ENCODE measurements at regions of chr4 and their contacts with region 1.

Region 1: GRCh38 chr4:76213415-76214176 is at the start of gene SCARB2:
- DNase-seq: peak; percentile 96
- H3K4me3 ChIP-seq: peak within 1 kb of the TSS; percentile 85 to 86
- H3K27ac ChIP-seq: peak within 1 kb of the TSS; percentile 88 to 95
- H3K4me1 ChIP-seq: peaks cover 18 to 32% of the 10 kb centered on the region in 2 experiments; a peak in 3 of 4 replicates
- H3K27me3 ChIP-seq: no peaks in the 10 kb centered on the region
- CTCF ChIP-seq: no peak
- EP300 ChIP-seq: no peak
- RAD21 ChIP-seq: no peak
- polyA plus RNA-seq, gene SCARB2: 81.3 and 82.6 TPM in 2 replicates

Region 2: GRCh38 chr4:76095568-76095967 is 118.0 kb before region 1 on chr4:
- CTCF ChIA-PET with region 1: no interaction called
- POLR2A ChIA-PET with region 1: no interaction called
- DNase-seq: no peak
- H3K4me3 ChIP-seq: no peak overlapping the region
- H3K27ac ChIP-seq: no peak overlapping the region
- H3K4me1 ChIP-seq: peaks cover 0 to 2% of the 10 kb centered on the region in 2 experiments; a peak in 2 of 4 replicates
- H3K27me3 ChIP-seq: no peaks in the 10 kb centered on the region
- CTCF ChIP-seq: no peak
- EP300 ChIP-seq: no peak
- RAD21 ChIP-seq: no peak

Region 3: DNA sequence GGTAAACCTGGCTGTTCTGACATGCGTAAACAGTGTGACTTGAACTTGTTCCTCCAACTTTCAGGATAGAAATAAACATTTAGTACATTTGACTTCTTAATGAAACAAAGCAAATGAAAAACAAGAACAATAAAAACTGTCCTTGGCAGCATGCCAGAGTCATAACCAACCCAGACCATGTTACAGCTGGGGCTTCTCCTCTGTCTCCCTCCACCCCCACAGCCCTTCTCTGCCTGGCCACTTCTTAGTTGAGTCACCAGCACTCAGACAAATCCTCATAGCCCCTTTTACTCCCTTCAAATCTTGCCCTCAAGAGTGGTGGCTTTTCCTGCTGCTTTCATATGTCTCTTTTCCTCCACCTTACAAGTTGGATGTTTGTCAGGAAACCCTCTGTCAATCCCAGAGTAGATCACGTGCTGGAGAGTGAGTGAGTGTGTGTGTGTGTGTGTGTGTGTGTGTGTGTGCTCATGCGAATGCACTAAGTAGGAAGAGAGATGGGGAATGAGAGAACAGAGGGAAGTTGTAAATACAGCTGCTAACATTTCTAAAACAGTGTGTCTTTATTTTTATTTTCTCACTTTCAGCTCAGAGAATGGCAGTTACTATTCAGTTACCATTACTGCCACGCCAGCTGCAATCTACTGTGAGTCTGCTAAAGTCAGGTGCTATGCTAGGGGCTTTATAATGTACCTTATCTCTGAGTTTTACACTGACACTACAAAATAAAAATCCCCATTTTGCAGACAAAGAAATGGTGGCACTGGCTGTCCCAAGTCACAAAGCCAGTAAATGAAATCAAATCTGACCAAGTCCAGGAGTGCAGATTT is 15.0 kb before region 1 on chr4:
- CTCF ChIA-PET with region 1: interaction called, 4 read pairs
- POLR2A ChIA-PET with region 1: interaction called, 16 read pairs
- DNase-seq: peak; percentile 61
- H3K4me3 ChIP-seq: peak overlapping the region in 1 of 2 experiments; percentile 14; a peak in 1 of 4 replicates
- H3K27ac ChIP-seq: peak overlapping the region; percentile 73 to 99
- H3K4me1 ChIP-seq: peaks cover 27 to 49% of the 10 kb centered on the region in 2 experiments
- H3K27me3 ChIP-seq: no peaks in the 10 kb centered on the region
- CTCF ChIP-seq: no peak
- EP300 ChIP-seq: 0 out of 4 replicates have a peak, but pooled peaks of 1 of the 2 experiments have one; percentile 4
- RAD21 ChIP-seq: no peak

Region 4: GRCh38 chr4:76305971-76306881 is 92.6 kb after region 1 on chr4 and contains the start of gene STBD1:
- CTCF ChIA-PET with region 1: interaction called, 7 read pairs
- POLR2A ChIA-PET with region 1: interaction called, 13 read pairs
- DNase-seq: peak; percentile 86
- H3K4me3 ChIP-seq: peak within 1 kb of the TSS; percentile 92
- H3K27ac ChIP-seq: peak within 1 kb of the TSS; percentile 83 to 92
- H3K4me1 ChIP-seq: peaks cover 10 to 32% of the 10 kb centered on the region in 2 experiments; a peak in 2 of 4 replicates
- H3K27me3 ChIP-seq: no peaks in the 10 kb centered on the region
- CTCF ChIP-seq: no peak
- EP300 ChIP-seq: no peak; a peak in 1 of 4 replicates
- RAD21 ChIP-seq: 0 out of 2 replicates have a peak, but pooled peaks have one; percentile 4
- polyA plus RNA-seq, gene STBD1: 1.6 and 1.8 TPM in 2 replicates

Region 5: GRCh38 chr4:76498550-76498949 is 285.0 kb after region 1 on chr4:
- CTCF ChIA-PET with region 1: no interaction called
- POLR2A ChIA-PET with region 1: no interaction called
- DNase-seq: no peak
- H3K4me3 ChIP-seq: no peak overlapping the region
- H3K27ac ChIP-seq: no peak overlapping the region
- H3K4me1 ChIP-seq: no peaks in the 10 kb centered on the region; a peak in 1 of 4 replicates
- H3K27me3 ChIP-seq: peaks cover 5% of the 10 kb centered on the region; the same call in 1 of the 2 replicates
- CTCF ChIP-seq: no peak
- EP300 ChIP-seq: no peak
- RAD21 ChIP-seq: no peak